ENCODE measurements at regions of chr10 and their contacts with region 1.

Region 1: GRCh38 chr10:6088721-6089390 is at the start of gene RBM17:
- DNase-seq: peak; percentile 91 to 100 (median 96)
- ATAC-seq: peak; percentile 84 to 92 (median 85)
- H3K4me3 ChIP-seq: peak within 1 kb of the TSS; percentile 68 to 83
- H3K4me3 Mint-ChIP-seq: peak within 1 kb of the TSS; percentile 87 to 92 (median 91)
- H3K27ac ChIP-seq: no peak within 1 kb of the TSS
- H3K27ac Mint-ChIP-seq: peak within 1 kb of the TSS; percentile 77 to 85
- H3K4me1 ChIP-seq: peaks cover 28 to 46% of the 10 kb centered on the region in 2 experiments
- H3K4me1 Mint-ChIP-seq: peaks cover 65 to 73% (median 72%) of the 10 kb centered on the region in 3 donors
- H3K27me3 ChIP-seq: peaks cover 0 to 4% of the 10 kb centered on the region in 2 experiments
- H3K27me3 Mint-ChIP-seq: no peaks in the 10 kb centered on the region
- total RNA-seq, gene RBM17: 119 to 148 (median 127) TPM

Region 2: GRCh38 chr10:6014241-6014761 is 74.6 kb before region 1 on chr10:
- CTCF ChIA-PET with region 1: interaction called, 3 to 43 read pairs
- POLR2A ChIA-PET with region 1: interaction called in 1 of 2 experiments, 5 read pairs
- DNase-seq: peak; percentile 32 to 84 (median 66)
- ATAC-seq: peak; percentile 94 to 99 (median 96)
- H3K4me3 ChIP-seq: no peak overlapping the region
- H3K4me3 Mint-ChIP-seq: peak overlapping the region in 1 of 3 donors; percentile 34
- H3K27ac ChIP-seq: peak overlapping the region; percentile 87
- H3K27ac Mint-ChIP-seq: peak overlapping the region; percentile 89 to 93
- H3K4me1 ChIP-seq: peaks cover 6 to 16% of the 10 kb centered on the region in 2 experiments
- H3K4me1 Mint-ChIP-seq: peaks cover 14 to 29% (median 17%) of the 10 kb centered on the region in 3 donors
- H3K27me3 ChIP-seq: no peaks in the 10 kb centered on the region
- H3K27me3 Mint-ChIP-seq: peaks cover 0 to under 1% of the 10 kb centered on the region in 2 donors

Region 3: GRCh38 chr10:6036861-6037321 is 52.0 kb before region 1 on chr10:
- CTCF ChIA-PET with region 1: interaction called, 3 to 22 read pairs
- POLR2A ChIA-PET with region 1: no interaction called
- DNase-seq: peak in 20 of 35 experiments; percentile 13 to 56 (median 29)
- ATAC-seq: peak; percentile 32 to 76 (median 46)
- H3K4me3 ChIP-seq: no peak overlapping the region
- H3K4me3 Mint-ChIP-seq: peak overlapping the region in 2 of 3 donors; percentile 24 to 55
- H3K27ac ChIP-seq: peak overlapping the region; percentile 74
- H3K27ac Mint-ChIP-seq: peak overlapping the region; percentile 95 to 96
- H3K4me1 ChIP-seq: peaks cover 18 to 41% of the 10 kb centered on the region in 2 experiments
- H3K4me1 Mint-ChIP-seq: peaks cover 51 to 75% (median 53%) of the 10 kb centered on the region in 3 donors
- H3K27me3 ChIP-seq: no peaks in the 10 kb centered on the region
- H3K27me3 Mint-ChIP-seq: no peaks in the 10 kb centered on the region

Region 4: DNA sequence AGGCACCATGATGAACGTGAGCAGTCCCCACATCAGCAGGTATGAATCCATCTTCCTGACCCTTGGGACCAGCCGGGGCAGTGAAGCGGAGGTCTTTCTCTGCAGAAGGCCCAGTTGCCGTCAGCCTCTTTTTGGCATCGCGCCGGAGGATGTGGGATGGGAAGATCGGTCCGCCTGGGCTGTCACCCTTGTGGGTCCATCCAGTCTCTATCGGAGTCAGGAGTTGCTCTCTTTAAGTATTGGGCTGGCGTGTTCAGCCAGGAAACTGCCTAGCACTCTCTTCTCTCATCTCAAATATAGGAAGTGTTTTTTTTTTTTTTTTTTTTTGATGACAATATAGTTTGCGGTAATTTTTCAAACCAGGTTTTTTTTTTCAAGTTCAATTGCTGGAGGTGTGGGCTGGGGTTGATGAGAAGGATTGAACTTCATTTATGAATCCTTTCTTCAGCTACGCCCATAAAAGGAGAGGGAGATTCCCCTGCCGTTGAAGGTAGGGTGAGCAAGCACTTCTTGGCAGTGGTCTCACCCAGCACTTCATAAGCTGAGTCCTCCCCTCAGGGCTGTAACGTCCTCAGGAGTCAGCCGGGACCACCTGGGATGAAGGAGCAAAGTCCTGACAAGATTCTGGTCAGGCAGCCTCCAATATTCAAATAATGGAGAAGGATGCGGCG is 26.6 kb before region 1 on chr10 and contains the start of gene IL2RA:
- CTCF ChIA-PET with region 1: interaction called in 1 of 2 experiments, 11 read pairs
- POLR2A ChIA-PET with region 1: interaction called in 1 of 2 experiments, 3 read pairs
- DNase-seq: peak in 31 of 35 experiments; percentile 21 to 84 (median 41)
- ATAC-seq: peak; percentile 76 to 89 (median 79)
- H3K4me3 ChIP-seq: peak within 1 kb of the TSS; percentile 44 to 67
- H3K4me3 Mint-ChIP-seq: peak within 1 kb of the TSS; percentile 83 to 92 (median 85)
- H3K27ac ChIP-seq: peak within 1 kb of the TSS; percentile 61
- H3K27ac Mint-ChIP-seq: peak within 1 kb of the TSS; percentile 81 to 93
- H3K4me1 ChIP-seq: peaks cover 11 to 40% of the 10 kb centered on the region in 2 experiments
- H3K4me1 Mint-ChIP-seq: peaks cover 64 to 85% (median 65%) of the 10 kb centered on the region in 3 donors
- H3K27me3 ChIP-seq: peaks cover 0 to 3% of the 10 kb centered on the region in 2 experiments
- H3K27me3 Mint-ChIP-seq: no peaks in the 10 kb centered on the region
- total RNA-seq, gene IL2RA: 19.9 to 40.4 (median 28.1) TPM

Region 5: DNA sequence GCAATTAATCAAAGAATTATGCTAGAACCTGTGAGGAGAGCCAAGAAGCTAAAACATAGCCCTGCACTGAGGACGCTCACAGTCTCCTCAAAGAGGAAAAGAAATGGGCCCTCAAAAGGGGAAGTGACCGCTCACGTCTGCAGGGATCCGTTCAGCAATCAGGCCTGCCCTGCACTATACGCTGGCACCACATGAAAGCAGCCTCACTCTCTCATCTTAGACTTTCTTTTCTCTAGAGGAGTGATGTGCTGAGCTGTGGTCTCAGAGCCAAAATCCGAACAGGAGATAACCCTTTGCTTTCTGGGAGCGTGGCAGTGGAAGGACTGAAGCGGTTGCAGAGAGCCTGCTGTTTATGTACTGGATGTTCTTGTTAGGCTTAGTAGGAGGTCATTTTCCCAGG is 20.4 kb before region 1 on chr10:
- CTCF ChIA-PET with region 1: interaction called in 1 of 2 experiments, 15 read pairs
- POLR2A ChIA-PET with region 1: interaction called in 1 of 2 experiments, 7 read pairs
- DNase-seq: peak in 24 of 35 experiments; percentile 27 to 71 (median 44)
- ATAC-seq: peak; percentile 73 to 87 (median 76)
- H3K4me3 ChIP-seq: peak overlapping the region; percentile 16 to 44
- H3K4me3 Mint-ChIP-seq: peak overlapping the region; percentile 43 to 80 (median 73)
- H3K27ac ChIP-seq: peak overlapping the region; percentile 46
- H3K27ac Mint-ChIP-seq: peak overlapping the region; percentile 81 to 95
- H3K4me1 ChIP-seq: peaks cover 41 to 57% of the 10 kb centered on the region in 2 experiments
- H3K4me1 Mint-ChIP-seq: peaks cover 72 to 91% (median 85%) of the 10 kb centered on the region in 3 donors
- H3K27me3 ChIP-seq: no peaks in the 10 kb centered on the region
- H3K27me3 Mint-ChIP-seq: peaks cover 0 to 2% of the 10 kb centered on the region in 2 donors

Region 6: DNA sequence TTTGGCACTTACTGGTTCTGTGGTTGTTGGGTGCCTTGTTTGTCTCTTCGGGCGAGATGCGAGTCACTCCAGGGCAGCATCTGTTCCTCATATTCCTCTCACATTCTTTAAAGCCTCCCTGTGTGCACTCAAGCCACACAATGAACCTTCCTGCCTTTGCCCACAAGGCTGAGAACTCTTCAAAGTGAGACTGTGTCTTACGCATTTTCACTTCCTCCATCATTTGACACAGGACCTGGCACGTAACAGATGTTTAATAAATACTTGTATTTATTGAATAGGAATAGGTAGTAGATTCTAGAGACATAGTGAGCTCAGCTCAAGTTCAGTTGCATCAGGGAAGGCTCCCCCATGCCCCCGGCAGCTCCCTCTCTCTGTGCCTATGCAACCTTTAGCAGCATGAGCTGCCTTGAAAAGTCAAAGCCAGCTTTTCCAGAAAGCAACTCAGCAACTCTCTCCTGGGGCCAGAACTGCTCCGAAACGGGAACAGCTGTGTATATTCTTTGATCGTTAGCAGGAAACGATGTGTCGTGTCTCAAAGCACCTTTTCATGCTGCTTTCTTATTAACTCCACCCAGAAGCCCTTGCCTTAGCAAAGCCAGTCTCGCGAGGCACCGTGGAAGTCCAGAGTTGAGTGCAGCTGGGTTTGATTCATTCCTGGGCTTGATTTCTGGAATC is 211.4 kb after region 1 on chr10:
- CTCF ChIA-PET with region 1: no interaction called
- POLR2A ChIA-PET with region 1: no interaction called
- DNase-seq: peak in 34 of 35 experiments; percentile 9 to 72 (median 35)
- ATAC-seq: peak; percentile 79 to 89 (median 84)
- H3K4me3 ChIP-seq: no peak overlapping the region
- H3K4me3 Mint-ChIP-seq: peak overlapping the region; percentile 31 to 75 (median 35)
- H3K27ac ChIP-seq: peak overlapping the region; percentile 35
- H3K27ac Mint-ChIP-seq: peak overlapping the region; percentile 78 to 94
- H3K4me1 ChIP-seq: peaks cover 6 to 19% of the 10 kb centered on the region in 2 experiments
- H3K4me1 Mint-ChIP-seq: peaks cover 27 to 46% (median 40%) of the 10 kb centered on the region in 3 donors
- H3K27me3 ChIP-seq: no peaks in the 10 kb centered on the region
- H3K27me3 Mint-ChIP-seq: no peaks in the 10 kb centered on the region